ENCODE measurements at regions of chr5 and their contacts with region 1.

Region 1: GRCh38 chr5:132293066-132293991 is 865 bp upstream of the SLC22A4 start:
- DNase-seq: peak; percentile 89 to 91
- H3K4me3 ChIP-seq: peak overlapping the region; percentile 55
- H3K4me3 Mint-ChIP-seq: peak overlapping the region; percentile 85
- H3K27ac Mint-ChIP-seq: peak overlapping the region; percentile 93
- H3K4me1 ChIP-seq: peaks cover 8% of the 10 kb centered on the region; the same call in 1 of the 2 replicates
- H3K4me1 Mint-ChIP-seq: peaks cover 12% of the 10 kb centered on the region
- H3K27me3 ChIP-seq: no peaks in the 10 kb centered on the region
- H3K27me3 Mint-ChIP-seq: no peaks in the 10 kb centered on the region
- CTCF ChIP-seq: peak in 1 of 2 experiments; percentile 13

Region 2: DNA sequence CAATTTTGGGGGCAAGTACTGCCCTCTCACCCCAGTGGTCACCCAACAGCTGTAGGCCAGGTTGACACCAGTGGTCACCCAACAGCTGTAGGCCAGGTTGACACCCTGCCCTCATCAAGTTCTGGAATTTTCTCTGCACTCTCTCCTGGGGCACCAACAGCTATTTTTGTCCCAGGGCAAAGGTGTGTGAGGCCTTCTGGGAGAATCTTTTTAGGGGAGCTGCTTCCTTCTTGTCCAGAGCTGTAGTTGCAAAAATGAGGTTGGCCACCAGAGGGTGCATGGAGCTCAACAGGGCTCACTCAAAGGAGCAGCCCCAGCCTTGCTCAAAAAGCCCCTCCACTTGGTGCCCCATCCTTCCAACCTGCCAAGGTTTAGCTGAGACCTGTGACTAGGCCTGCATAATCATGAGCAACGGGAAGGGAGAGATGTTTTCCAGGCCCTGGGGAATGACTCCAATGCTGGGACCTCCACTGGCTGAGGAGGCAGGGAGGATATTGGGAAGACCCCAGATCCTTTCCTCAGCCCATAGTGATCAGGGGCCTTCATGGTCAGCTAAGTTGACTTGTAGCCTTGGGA is 55.1 kb before region 1 on chr5:
- CTCF ChIA-PET with region 1: interaction called, 26 read pairs
- POLR2A ChIA-PET with region 1: no interaction called
- intact Hi-C with region 1: no loop called
- DNase-seq: peak; percentile 78 to 83
- H3K4me3 ChIP-seq: no peak overlapping the region
- H3K4me3 Mint-ChIP-seq: no peak overlapping the region
- H3K27ac Mint-ChIP-seq: no peak overlapping the region
- H3K4me1 ChIP-seq: no peaks in the 10 kb centered on the region
- H3K4me1 Mint-ChIP-seq: no peaks in the 10 kb centered on the region
- H3K27me3 ChIP-seq: no peaks in the 10 kb centered on the region
- H3K27me3 Mint-ChIP-seq: no peaks in the 10 kb centered on the region
- CTCF ChIP-seq: peak; percentile 66 to 88

Region 3: GRCh38 chr5:132277971-132278911 is 15.1 kb before region 1 on chr5:
- CTCF ChIA-PET with region 1: interaction called, 27 read pairs
- POLR2A ChIA-PET with region 1: interaction called, 36 read pairs
- intact Hi-C with region 1: loop called (anchors 1 kb)
- DNase-seq: peak; percentile 82 to 91
- H3K4me3 ChIP-seq: no peak overlapping the region
- H3K4me3 Mint-ChIP-seq: peak overlapping the region; percentile 13
- H3K27ac Mint-ChIP-seq: peak overlapping the region; percentile 45
- H3K4me1 ChIP-seq: peaks cover 46% of the 10 kb centered on the region
- H3K4me1 Mint-ChIP-seq: peaks cover 50% of the 10 kb centered on the region
- H3K27me3 ChIP-seq: no peaks in the 10 kb centered on the region
- H3K27me3 Mint-ChIP-seq: no peaks in the 10 kb centered on the region
- CTCF ChIP-seq: peak; percentile 13 to 37

Region 4: DNA sequence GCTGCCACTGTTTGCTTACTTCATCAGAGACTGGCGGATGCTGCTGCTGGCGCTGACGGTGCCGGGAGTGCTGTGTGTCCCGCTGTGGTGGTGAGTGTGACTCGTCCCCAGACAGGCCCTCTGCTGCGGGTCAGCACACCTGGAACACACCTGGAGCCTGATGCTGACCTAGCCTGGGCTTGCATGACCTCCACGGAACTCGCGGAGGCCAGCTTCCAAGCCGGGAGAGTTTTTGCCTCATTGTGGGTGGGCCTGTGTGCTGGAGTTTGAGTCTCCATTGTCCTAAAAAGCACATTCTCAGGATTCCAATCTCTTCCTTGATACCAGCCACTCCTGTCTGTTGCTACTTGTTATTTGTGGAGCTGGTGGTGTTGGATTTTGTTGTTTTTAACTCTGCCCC is 28.9 kb after region 1 on chr5:
- CTCF ChIA-PET with region 1: interaction called, 3 read pairs
- POLR2A ChIA-PET with region 1: interaction called, 3 read pairs
- intact Hi-C with region 1: loop called (anchors 2 kb)
- DNase-seq: peak; percentile 37 to 48
- H3K4me3 ChIP-seq: no peak overlapping the region
- H3K4me3 Mint-ChIP-seq: no peak overlapping the region
- H3K27ac Mint-ChIP-seq: peak overlapping the region; percentile 13
- H3K4me1 ChIP-seq: peaks cover 13% of the 10 kb centered on the region
- H3K4me1 Mint-ChIP-seq: peaks cover 13% of the 10 kb centered on the region
- H3K27me3 ChIP-seq: no peaks in the 10 kb centered on the region
- H3K27me3 Mint-ChIP-seq: no peaks in the 10 kb centered on the region
- CTCF ChIP-seq: no peak